ENCODE measurements at regions of chr14 and their contacts with region 1.

Region 1: DNA sequence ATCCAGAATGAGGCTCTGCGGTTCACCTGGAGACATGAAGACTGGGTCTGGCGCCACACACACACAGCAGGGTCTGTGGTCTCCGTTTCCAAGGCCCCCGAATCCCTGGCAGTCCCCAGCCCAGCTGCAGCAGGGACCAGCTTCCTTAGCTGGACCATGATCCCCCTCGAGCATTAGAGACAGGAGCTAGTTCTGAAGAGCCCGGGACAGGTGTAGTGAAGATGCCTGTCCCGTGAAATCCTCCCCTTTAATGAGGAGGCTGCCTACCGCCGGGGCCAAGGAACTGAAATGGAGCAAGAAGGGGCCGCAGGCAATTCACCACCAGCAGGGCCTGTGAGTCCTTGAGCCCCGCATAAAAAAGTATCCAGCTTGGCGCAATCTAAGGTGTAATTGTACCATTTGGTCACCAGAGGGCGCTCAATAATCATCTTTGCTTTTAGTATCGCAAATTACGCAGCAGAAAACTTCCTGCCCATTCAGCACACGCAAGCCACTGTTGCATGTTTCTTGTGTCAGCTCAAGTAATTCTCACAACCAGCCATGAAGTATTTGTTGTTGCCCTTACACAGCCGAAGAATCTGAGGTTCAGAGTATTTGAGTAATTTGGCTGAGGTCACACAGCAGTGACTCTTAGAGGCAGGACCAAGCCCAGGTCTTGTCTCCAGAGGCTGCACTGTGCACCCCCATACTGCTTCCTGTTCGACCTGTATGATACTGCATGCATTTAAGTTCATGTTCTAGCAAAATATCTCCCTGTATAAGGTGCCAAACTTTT is 54.3 kb upstream of the PPP2R5C start:
- DNase-seq: peak; percentile 70 to 83 (median 82)
- H3K4me3 ChIP-seq: peak overlapping the region; percentile 21 to 52
- H3K4me3 Mint-ChIP-seq: peak overlapping the region; percentile 34 to 79 (median 74)
- H3K27ac ChIP-seq: peak overlapping the region; percentile 57
- H3K27ac Mint-ChIP-seq: peak overlapping the region; percentile 59 to 94 (median 90)
- H3K4me1 ChIP-seq: peaks cover 52% of the 10 kb centered on the region
- H3K4me1 Mint-ChIP-seq: peaks cover 23 to 54% (median 41%) of the 10 kb centered on the region in 4 donors
- H3K27me3 ChIP-seq: no peaks in the 10 kb centered on the region
- H3K27me3 Mint-ChIP-seq: no peaks in the 10 kb centered on the region

Region 2: DNA sequence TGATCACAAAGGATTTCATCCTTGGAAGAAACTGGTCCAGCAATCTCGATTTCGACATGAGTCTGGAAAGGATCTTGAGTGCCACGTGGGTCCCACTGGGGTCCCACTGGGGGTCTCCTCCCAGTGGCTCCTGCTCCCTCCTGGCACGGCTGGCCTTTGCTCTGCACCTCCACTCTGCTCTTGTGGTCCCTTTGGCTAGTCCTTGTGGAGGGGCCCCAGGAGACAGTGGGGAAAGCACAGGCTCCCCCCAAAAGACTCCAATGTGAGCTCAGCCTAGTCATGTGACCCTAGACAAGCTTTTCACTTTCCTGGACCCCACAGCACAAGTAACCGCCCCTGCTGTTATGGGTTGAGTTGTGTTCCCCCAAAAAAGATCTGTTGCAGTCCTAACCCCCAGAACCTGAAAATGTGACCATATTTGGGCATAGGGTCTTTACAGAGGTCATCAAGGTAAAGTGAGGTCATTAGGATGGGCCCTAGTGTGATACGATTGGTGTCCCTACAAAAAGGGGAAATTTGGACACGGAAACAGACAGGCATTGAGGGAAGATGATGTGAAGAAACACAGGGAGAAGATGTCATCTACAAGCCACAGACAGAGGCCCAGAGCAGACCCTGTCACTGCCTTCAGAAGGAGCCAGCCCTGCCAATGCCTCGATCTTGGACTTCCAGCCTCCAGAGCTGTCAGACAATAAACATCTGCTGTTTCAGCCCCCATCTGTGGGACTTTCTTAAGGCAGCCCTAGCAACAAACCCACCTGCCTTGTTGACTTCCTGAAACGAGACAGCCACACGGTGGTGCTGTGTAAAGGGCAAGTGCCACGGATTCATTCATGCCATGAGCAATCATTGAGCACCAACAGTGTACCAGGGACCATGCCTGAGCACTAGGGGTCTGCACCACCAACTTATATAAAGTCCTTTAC is 30.4 kb after region 1 on chr14:
- CTCF ChIA-PET with region 1: interaction called, 23 read pairs
- POLR2A ChIA-PET with region 1: interaction called, 59 read pairs
- intact Hi-C with region 1: no loop called
- DNase-seq: peak in 1 of 5 donors; percentile 28
- H3K4me3 ChIP-seq: no peak overlapping the region
- H3K4me3 Mint-ChIP-seq: no peak overlapping the region
- H3K27ac ChIP-seq: no peak overlapping the region
- H3K27ac Mint-ChIP-seq: peak overlapping the region; percentile 8 to 92 (median 59)
- H3K4me1 ChIP-seq: peaks cover 13% of the 10 kb centered on the region
- H3K4me1 Mint-ChIP-seq: peaks cover 5 to 25% (median 9%) of the 10 kb centered on the region in 4 donors
- H3K27me3 ChIP-seq: no peaks in the 10 kb centered on the region
- H3K27me3 Mint-ChIP-seq: no peaks in the 10 kb centered on the region

Region 3: DNA sequence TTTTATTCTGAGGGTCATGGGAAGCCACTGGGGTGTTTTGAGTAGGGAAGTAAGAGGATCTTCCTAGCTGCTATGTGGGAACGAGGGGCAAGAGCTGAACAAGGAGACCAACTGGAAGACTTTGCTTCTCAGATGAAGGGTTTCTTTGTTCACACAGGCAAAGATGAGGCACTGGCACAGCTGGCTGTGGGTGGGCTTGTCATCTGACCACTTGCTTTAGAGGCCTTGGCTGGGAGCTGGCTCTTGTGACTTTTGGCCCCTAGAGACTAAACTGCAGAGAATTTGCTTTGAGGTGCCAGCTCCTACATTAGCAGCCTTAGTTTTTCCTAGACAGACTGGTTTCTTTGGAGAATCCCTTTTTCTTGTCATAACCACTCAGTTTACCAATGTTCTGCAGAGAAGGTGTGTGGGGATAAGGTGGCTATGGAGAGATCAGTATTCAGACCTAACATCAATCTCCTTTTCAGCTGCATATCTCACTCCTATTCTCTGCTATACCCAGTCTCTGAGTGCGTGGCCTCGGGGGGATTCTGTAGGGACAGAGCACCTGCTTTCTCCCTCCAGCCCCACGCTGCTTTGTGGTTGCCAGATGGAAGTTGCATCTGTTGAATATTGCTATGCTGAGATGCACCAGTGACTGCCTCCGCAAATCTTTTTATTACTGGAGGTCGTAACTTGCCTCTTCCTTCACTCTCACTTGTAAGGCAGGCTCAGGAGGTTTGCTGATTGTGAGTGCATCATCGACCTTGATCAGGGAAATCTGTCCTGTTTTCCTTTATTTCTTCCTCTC is 66.9 kb after region 1 on chr14:
- CTCF ChIA-PET with region 1: interaction called, 110 read pairs
- POLR2A ChIA-PET with region 1: interaction called, 52 read pairs
- intact Hi-C with region 1: loop called (anchors 1 kb)
- DNase-seq: no peak
- H3K4me3 ChIP-seq: no peak overlapping the region
- H3K4me3 Mint-ChIP-seq: no peak overlapping the region
- H3K27ac ChIP-seq: no peak overlapping the region
- H3K27ac Mint-ChIP-seq: peak overlapping the region in 3 of 7 donors; percentile 5 to 69 (median 42)
- H3K4me1 ChIP-seq: peaks cover 13% of the 10 kb centered on the region
- H3K4me1 Mint-ChIP-seq: peaks cover 14 to 42% (median 27%) of the 10 kb centered on the region in 4 donors
- H3K27me3 ChIP-seq: no peaks in the 10 kb centered on the region
- H3K27me3 Mint-ChIP-seq: no peaks in the 10 kb centered on the region

Region 4: DNA sequence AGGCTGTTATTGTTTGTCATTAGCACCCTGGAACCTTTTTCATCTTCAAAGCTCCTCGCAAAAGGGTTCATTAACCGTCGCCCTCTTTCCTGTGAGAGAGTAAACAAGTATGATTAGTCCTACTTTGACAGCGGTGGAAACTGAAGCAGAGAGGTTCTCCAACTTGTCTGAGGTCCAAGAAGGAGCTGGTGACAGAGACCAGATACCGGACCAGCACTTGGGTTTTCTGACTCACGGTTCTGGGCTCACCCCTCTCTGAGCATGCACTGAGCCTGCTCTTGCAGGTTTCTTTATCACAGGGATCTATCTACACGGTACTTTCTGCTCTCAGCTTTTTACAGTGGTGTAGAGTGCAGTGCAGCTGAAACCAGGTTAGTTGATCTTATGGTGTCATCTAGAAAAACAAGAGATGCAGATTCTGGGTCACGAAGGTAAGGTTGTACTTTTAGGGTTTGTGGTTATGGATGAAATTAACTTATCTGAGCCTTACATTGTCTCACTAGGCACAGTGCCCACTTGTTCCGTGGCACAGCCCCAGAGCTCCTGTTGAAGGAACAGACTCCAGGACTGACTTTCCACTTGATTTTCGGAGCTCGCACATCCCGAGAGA is 116.4 kb after region 1 on chr14:
- CTCF ChIA-PET with region 1: interaction called, 10 read pairs
- POLR2A ChIA-PET with region 1: interaction called, 63 read pairs
- intact Hi-C with region 1: no loop called
- DNase-seq: peak; percentile 83 to 95 (median 88)
- H3K4me3 ChIP-seq: peak overlapping the region; percentile 78 to 85
- H3K4me3 Mint-ChIP-seq: peak overlapping the region; percentile 90 to 99 (median 95)
- H3K27ac ChIP-seq: peak overlapping the region; percentile 98
- H3K27ac Mint-ChIP-seq: peak overlapping the region; percentile 97 to 100 (median 100)
- H3K4me1 ChIP-seq: peaks cover 84% of the 10 kb centered on the region
- H3K4me1 Mint-ChIP-seq: peaks cover 59 to 88% (median 69%) of the 10 kb centered on the region in 4 donors
- H3K27me3 ChIP-seq: no peaks in the 10 kb centered on the region
- H3K27me3 Mint-ChIP-seq: no peaks in the 10 kb centered on the region

Region 5: DNA sequence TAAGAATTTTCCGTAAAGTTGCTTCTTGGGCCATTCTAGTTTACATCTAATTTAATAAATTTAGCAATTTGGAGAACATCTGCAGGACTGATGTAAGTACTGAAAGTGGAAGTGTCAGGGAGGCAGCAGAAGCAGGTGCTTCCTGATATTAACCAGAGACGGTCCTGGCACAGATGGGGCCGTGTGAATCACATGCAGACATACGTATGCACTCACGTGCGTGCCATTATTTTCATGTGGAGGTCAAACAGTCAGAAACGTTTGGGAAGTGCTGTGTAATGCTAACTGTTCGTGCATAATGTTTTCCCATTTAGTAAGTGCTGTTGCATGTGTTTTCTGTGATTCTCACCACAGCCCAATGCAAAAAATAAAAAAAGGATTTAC is 169.3 kb after region 1 on chr14:
- CTCF ChIA-PET with region 1: interaction called, 5 read pairs
- POLR2A ChIA-PET with region 1: interaction called, 6 read pairs
- intact Hi-C with region 1: loop called (anchors 1 kb)
- DNase-seq: peak; percentile 71 to 94 (median 82)
- H3K4me3 ChIP-seq: peak overlapping the region in 1 of 2 donors; percentile 8
- H3K4me3 Mint-ChIP-seq: peak overlapping the region; percentile 59 to 86 (median 76)
- H3K27ac ChIP-seq: peak overlapping the region; percentile 65
- H3K27ac Mint-ChIP-seq: peak overlapping the region; percentile 73 to 97 (median 91)
- H3K4me1 ChIP-seq: peaks cover 88% of the 10 kb centered on the region
- H3K4me1 Mint-ChIP-seq: peaks cover 55 to 88% (median 74%) of the 10 kb centered on the region in 4 donors
- H3K27me3 ChIP-seq: no peaks in the 10 kb centered on the region
- H3K27me3 Mint-ChIP-seq: no peaks in the 10 kb centered on the region

Region 6: DNA sequence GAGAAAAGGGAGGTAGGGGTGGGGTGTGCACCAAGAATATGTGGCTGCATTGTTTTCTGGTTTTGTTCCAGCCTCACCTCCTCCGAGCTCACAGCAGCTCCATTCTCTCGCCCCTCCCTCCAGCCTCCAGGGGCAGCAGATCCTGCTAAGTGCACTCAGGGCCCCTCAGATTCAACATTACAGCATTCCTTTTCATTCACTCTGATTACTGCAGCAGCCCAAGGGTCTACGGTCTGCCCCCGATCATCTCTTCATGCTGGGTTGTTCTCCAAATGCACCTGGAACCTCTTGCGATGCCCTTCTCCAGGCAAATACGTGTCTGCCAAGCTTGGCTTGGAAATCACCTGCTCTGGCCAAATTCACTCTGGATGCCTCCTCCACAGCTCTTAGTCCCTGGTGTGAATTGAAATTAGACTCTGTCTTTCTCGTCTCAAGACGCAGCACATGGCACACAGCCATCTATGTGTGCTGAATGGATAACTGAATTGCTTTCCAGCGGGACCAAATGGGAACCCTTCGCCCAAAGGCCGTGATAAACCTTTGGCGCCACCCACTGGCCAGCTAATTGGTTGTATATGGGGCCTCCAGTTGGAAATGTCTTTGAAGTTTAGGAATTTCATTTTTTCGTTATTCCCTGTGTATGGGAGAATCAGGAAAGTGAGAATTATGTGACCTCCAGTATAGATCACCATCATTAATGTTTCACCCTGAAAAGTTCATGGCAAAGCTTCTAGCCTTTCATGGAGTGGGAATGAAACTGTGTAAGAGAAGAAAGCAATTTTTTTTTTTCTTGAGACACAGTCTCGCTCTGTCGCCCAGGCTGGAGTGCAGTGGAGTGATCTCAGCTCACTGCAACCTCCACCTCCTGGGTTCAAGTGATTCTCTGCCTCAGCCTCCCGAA is 389.2 kb after region 1 on chr14:
- CTCF ChIA-PET with region 1: interaction called, 14 read pairs
- POLR2A ChIA-PET with region 1: interaction called, 4 read pairs
- intact Hi-C with region 1: loop called (anchors 1 kb)
- DNase-seq: peak; percentile 45 to 66 (median 52)
- H3K4me3 ChIP-seq: no peak overlapping the region
- H3K4me3 Mint-ChIP-seq: no peak overlapping the region
- H3K27ac ChIP-seq: no peak overlapping the region
- H3K27ac Mint-ChIP-seq: peak overlapping the region in 3 of 7 donors; percentile 74 to 75 (median 74)
- H3K4me1 ChIP-seq: no peaks in the 10 kb centered on the region
- H3K4me1 Mint-ChIP-seq: peaks cover 0 to 4% (median under 1%) of the 10 kb centered on the region in 4 donors
- H3K27me3 ChIP-seq: no peaks in the 10 kb centered on the region
- H3K27me3 Mint-ChIP-seq: no peaks in the 10 kb centered on the region